ENCODE measurements at regions of chr1 and their contacts with region 1.

Region 1: GRCh38 chr1:178101654-178102053 is 7.8 kb downstream of the RASAL2 start:
- DNase-seq: no peak
- ATAC-seq: no peak
- H3K4me3 ChIP-seq: no peak overlapping the region
- H3K27ac ChIP-seq: no peak overlapping the region
- H3K4me1 ChIP-seq: peaks cover 2% of the 10 kb centered on the region
- H3K27me3 ChIP-seq: no peaks in the 10 kb centered on the region

Region 2: GRCh38 chr1:178137238-178137637 is 35.6 kb after region 1 on chr1:
- intact Hi-C with region 1: loop called in 1 of 4 experiments (anchors 5 kb)
- DNase-seq: no peak
- ATAC-seq: peak; percentile 14 to 22
- H3K4me3 ChIP-seq: no peak overlapping the region
- H3K27ac ChIP-seq: no peak overlapping the region
- H3K4me1 ChIP-seq: peaks cover 3% of the 10 kb centered on the region
- H3K27me3 ChIP-seq: no peaks in the 10 kb centered on the region

Region 3: GRCh38 chr1:178172954-178173353 is 71.3 kb after region 1 on chr1:
- intact Hi-C with region 1: loop called in 1 of 4 experiments (anchors 10 kb)
- DNase-seq: no peak
- ATAC-seq: no peak
- H3K4me3 ChIP-seq: no peak overlapping the region
- H3K27ac ChIP-seq: no peak overlapping the region
- H3K4me1 ChIP-seq: peaks cover 6% of the 10 kb centered on the region
- H3K27me3 ChIP-seq: no peaks in the 10 kb centered on the region

Region 4: DNA sequence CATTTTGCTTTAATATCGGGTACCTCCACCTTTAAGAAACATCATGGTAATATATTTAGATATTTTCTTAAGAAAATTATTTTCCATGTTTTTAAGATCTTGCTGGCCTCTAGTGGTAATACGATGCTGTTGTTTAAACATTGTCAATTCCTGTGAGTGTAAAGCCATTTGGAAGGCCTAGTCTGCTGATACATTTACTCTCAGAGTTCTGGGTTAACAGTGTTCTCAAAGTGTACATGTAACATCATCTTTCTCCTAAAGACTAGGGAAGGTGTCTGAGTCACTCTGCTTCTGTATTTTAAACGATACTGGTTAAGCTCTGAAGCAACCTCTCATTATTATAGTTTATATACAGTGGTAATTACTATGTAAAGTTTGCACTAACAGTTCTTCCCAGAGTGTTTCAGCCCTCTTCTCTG is 181.3 kb after region 1 on chr1:
- intact Hi-C with region 1: no loop called
- DNase-seq: no peak
- ATAC-seq: peak; percentile 18 to 31
- H3K4me3 ChIP-seq: no peak overlapping the region
- H3K27ac ChIP-seq: no peak overlapping the region
- H3K4me1 ChIP-seq: no peaks in the 10 kb centered on the region
- H3K27me3 ChIP-seq: no peaks in the 10 kb centered on the region

Region 5: DNA sequence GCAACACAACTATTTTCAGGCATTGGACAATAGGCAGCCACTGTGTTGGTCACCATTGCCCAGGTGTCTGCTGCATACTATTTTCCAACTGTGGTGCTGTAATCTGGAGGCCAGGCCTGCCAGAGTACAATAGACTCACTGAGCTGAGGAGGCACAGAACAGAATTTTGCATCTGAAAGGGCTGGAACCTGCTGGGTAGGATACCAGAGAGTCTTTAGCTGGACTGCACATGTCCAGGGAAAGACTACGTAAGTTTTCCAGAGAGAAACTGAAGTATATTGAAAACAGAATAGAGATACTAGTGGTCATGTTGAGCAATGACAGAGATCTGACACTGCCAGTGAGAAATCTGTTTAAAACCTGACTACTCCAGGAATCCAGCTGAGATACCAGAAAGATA is 193.0 kb after region 1 on chr1:
- intact Hi-C with region 1: loop called in 1 of 4 experiments (anchors 10 kb)
- DNase-seq: no peak
- ATAC-seq: no peak
- H3K4me3 ChIP-seq: no peak overlapping the region
- H3K27ac ChIP-seq: no peak overlapping the region
- H3K4me1 ChIP-seq: peaks cover 3% of the 10 kb centered on the region
- H3K27me3 ChIP-seq: no peaks in the 10 kb centered on the region

Region 6: GRCh38 chr1:178354816-178355215 is 253.2 kb after region 1 on chr1:
- intact Hi-C with region 1: no loop called
- DNase-seq: no peak
- ATAC-seq: peak in 1 of 2 donors; percentile 37
- H3K4me3 ChIP-seq: no peak overlapping the region
- H3K27ac ChIP-seq: no peak overlapping the region
- H3K4me1 ChIP-seq: peaks cover 5% of the 10 kb centered on the region
- H3K27me3 ChIP-seq: no peaks in the 10 kb centered on the region

Measured in right cardiac atrium (tissue), 5 donors.